Lower lobe of right lung (tissue), 2 donors: ENCODE measurements at regions of chr5 and their contacts with region 1.

Region 1: GRCh38 chr5:154654486-154655371 is 100.4 kb upstream of the LARP1 start:
- DNase-seq: no peak
- ATAC-seq: no peak
- H3K4me3 ChIP-seq: peak overlapping the region; percentile 10
- H3K27ac ChIP-seq: peak overlapping the region; percentile 52
- H3K4me1 ChIP-seq: peaks cover 26% of the 10 kb centered on the region
- H3K27me3 ChIP-seq: no peaks in the 10 kb centered on the region
- CTCF ChIP-seq: no peak

Region 2: GRCh38 chr5:154375329-154376008 is 279.3 kb before region 1 on chr5:
- intact Hi-C with region 1: no loop called
- DNase-seq: no peak
- ATAC-seq: no peak
- H3K4me3 ChIP-seq: no peak overlapping the region
- H3K27ac ChIP-seq: peak overlapping the region; percentile 31
- H3K4me1 ChIP-seq: peaks cover 19% of the 10 kb centered on the region
- H3K27me3 ChIP-seq: no peaks in the 10 kb centered on the region
- CTCF ChIP-seq: no peak

Region 3: DNA sequence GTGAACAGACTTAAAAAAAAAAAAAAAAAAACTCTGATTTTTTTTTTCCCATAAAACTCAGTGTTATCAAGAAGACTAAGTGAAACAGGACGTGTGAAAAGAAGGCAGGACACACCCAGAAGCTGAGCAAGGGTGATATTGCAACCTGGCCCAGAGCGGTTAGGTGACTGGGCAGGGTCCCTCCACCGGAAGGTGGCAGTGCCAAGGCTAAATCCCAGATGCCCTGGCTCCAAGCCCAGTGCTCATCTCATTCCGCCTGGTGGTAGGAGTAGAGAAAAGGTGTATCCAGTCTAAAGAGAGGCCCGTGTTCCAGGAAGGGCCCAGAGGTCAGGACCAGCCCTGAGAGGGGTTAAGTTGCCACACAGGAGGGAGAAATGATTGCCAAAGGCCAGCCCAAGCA is 260.4 kb before region 1 on chr5:
- intact Hi-C with region 1: no loop called
- DNase-seq: no peak
- ATAC-seq: peak in 1 of 2 donors; percentile 16
- H3K4me3 ChIP-seq: no peak overlapping the region
- H3K27ac ChIP-seq: no peak overlapping the region
- H3K4me1 ChIP-seq: peaks cover 8% of the 10 kb centered on the region
- H3K27me3 ChIP-seq: no peaks in the 10 kb centered on the region
- CTCF ChIP-seq: no peak

Region 4: DNA sequence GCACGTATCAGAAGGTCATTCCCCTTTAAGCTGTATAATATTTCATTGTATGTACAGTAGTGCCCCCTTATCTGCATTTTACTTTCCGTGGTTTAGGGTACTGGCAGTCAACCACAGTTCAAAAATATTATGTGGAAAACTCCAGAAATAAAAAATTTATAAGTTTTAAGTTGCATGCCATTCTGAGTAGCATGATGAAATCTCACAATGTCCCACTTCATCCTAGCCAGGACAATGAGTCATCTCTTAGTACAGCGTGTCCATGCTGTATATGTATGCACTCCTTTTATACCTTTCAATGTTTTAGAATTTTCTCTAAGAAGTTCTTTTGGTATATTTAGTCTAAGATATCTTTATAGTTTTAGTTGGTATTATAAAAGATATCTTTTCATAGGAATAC is 61.7 kb before region 1 on chr5:
- intact Hi-C with region 1: no loop called
- DNase-seq: no peak
- ATAC-seq: no peak
- H3K4me3 ChIP-seq: no peak overlapping the region
- H3K27ac ChIP-seq: no peak overlapping the region
- H3K4me1 ChIP-seq: no peaks in the 10 kb centered on the region
- H3K27me3 ChIP-seq: no peaks in the 10 kb centered on the region
- CTCF ChIP-seq: no peak

Region 5: GRCh38 chr5:154811653-154812365 is 157.1 kb after region 1 on chr5:
- intact Hi-C with region 1: loop called (anchors 10 kb)
- DNase-seq: peak; percentile 66
- ATAC-seq: peak; percentile 82 to 88
- H3K4me3 ChIP-seq: no peak overlapping the region
- H3K27ac ChIP-seq: no peak overlapping the region
- H3K4me1 ChIP-seq: peaks cover 12% of the 10 kb centered on the region
- H3K27me3 ChIP-seq: no peaks in the 10 kb centered on the region
- CTCF ChIP-seq: peak; percentile 88